Cardiac septum (tissue), 1 donor: ENCODE measurements at regions of chr9 and their contacts with region 1.

Region 1: GRCh38 chr9:5186416-5187169 is 1.2 kb upstream of the INSL6 start:
- DNase-seq: no peak

Region 2: GRCh38 chr9:5425006-5425628 is 238.5 kb after region 1 on chr9:
- intact Hi-C with region 1: loop called (anchors 5 kb)
- DNase-seq: no peak

Region 3: DNA sequence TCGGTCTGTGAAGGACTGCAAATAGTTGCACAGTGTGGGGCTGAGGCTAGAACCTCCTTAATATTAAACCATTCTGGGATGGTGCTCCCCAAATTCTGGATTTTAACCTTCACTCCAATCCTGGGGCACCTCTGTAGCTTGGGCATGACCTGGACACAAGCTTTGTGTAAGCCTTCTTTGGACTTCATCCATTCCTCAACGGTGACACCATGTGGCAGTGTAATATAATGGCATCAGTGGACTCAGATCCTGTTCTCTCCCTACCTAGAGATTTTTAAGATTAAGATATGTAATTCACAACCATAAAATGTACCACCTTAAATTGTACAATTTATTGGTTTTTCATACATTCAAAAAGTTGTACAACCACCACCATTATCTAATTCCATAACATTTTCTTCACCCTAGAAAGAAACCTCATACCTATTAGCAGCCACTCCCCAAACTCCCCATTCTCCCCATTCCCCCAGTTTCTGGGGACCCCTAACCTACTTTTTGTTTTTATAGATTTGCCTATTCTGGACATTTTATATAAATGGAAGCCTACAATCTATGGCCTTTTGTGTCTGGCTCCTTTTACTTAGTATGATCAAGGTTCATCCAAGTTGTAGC is 255.9 kb after region 1 on chr9:
- intact Hi-C with region 1: loop called (anchors 5 kb)
- DNase-seq: no peak

Region 4: DNA sequence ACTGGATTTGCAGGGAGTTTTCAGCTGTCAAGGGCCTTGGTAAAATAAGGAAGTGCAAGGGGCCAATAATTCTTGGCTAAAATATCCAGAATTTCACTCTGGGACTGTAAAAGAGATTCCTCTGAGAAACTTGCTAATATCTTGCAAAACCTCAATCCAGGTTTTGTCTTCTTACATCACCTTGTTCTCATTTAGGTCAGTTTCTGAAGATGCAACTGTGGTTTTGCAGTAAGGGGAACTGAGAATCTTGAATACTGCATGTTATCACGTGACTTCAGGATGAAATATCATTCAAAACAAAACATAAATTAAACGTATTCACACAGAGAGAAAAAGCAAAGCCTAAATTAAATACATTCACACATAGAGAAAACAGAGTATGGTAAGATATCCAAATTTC is 407.3 kb after region 1 on chr9:
- intact Hi-C with region 1: loop called (anchors 2 kb)
- DNase-seq: no peak